Ascending aorta (tissue), 2 donors: ENCODE measurements at regions of chr7 and their contacts with region 1.

Region 1: GRCh38 chr7:151244196-151244840 is 4.2 kb downstream of the SMARCD3 start:
- DNase-seq: peak in 1 of 2 donors; percentile 72
- H3K4me3 ChIP-seq: peak overlapping the region in 1 of 2 donors; percentile 74
- H3K27ac ChIP-seq: peak overlapping the region in 1 of 2 donors; percentile 95
- H3K4me1 ChIP-seq: peaks cover 28 to 33% of the 10 kb centered on the region in 2 donors
- H3K27me3 ChIP-seq: no peaks in the 10 kb centered on the region
- CTCF ChIP-seq: peak; percentile 54 to 92 (median 91)

Region 2: DNA sequence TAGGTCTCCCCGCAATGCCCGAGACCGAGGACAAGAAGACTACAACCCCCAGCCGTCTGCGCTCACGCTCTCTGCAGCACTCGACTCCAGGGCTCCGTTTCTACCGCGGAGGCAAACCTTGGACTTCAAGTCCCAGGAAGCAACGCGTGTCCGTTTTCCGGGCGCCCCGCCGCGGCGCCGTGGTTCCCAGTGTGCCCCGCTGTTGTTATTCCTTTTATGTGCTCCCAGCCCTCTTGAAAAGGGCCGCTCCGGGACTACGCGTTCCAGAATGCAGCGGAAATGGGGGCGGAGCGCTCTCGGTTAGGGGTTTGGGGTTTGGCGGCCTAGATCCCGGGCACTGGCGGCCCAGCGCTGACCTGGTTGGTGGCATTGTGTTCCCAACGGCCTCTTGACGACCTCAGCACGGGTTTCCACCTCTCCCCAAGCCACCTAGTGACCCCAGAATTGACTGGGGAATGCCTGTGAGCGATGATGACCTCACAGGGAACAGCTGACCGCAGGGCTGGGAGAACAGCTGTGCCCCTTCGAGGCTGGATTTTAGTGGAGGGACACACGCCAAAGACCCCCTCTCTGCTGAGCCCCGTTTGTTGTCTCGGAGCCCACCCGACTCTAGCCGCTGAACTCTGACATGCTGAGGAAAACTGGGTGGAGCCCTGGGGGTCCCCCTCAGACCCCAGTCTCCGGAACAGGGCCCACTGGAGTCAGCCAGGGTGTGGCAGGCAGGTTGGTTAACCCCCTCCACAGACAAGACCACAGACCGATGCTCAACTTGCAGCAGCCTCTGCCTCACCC is 186.1 kb before region 1 on chr7:
- intact Hi-C with region 1: loop called (anchors 5 kb)
- DNase-seq: peak; percentile 98 to 100
- H3K4me3 ChIP-seq: peak overlapping the region; percentile 92 to 95
- H3K27ac ChIP-seq: peak overlapping the region; percentile 85 to 95
- H3K4me1 ChIP-seq: peaks cover 21 to 44% of the 10 kb centered on the region in 2 donors
- H3K27me3 ChIP-seq: no peaks in the 10 kb centered on the region
- CTCF ChIP-seq: no peak

Region 3: DNA sequence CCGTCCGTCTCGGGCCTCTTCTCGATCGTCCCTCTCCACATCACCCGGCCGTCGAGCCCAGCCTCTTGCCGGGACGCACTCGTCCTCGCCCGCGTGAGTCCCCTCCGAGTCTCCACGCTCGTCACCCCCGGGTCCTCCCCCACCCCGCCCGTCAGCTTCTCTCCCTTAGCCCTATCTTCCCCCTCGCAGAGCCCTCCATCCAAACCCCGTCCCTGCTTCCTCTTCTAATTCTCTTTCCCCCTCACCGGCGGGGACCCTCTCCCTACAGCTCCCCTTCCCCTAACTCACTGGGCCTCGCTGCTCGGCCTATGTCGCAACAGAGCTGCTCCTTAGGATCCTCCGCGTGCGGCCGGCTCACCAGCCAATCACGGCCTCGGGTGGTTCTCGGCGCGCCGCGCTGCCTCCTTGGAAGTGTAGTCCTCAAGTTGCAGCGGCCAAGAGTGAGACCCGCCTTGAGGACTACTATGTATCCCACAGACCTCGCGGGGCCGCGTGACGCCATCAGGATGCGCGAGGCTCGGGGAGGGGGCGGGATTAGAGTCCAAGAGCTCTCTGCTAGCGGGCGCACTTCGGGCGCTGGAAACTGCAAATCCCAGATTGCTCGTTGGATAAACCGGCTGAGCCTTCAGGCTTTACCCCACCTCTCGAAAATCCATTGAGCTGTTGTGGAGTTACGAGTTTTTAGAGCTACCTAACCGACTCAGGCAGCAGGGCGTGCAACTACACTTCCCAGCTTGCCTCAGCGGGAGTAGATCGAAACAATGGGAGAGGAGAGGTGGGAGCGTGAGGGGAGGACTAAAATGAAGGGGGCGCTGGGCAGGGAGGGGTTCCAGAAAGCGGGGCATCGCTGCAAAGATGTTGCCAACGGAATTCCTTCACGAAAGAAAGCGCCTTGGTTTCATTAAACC is 17.2 kb before region 1 on chr7 and contains the start of gene ABCF2:
- intact Hi-C with region 1: loop called (anchors 1 kb)
- DNase-seq: peak; percentile 98 to 100
- H3K4me3 ChIP-seq: peak within 1 kb of the TSS; percentile 79 to 94
- H3K27ac ChIP-seq: peak within 1 kb of the TSS; percentile 63 to 72
- H3K4me1 ChIP-seq: peaks cover 7 to 12% of the 10 kb centered on the region in 2 donors
- H3K27me3 ChIP-seq: no peaks in the 10 kb centered on the region
- CTCF ChIP-seq: no peak
- total RNA-seq, gene ABCF2: 85.3 TPM

Region 4: DNA sequence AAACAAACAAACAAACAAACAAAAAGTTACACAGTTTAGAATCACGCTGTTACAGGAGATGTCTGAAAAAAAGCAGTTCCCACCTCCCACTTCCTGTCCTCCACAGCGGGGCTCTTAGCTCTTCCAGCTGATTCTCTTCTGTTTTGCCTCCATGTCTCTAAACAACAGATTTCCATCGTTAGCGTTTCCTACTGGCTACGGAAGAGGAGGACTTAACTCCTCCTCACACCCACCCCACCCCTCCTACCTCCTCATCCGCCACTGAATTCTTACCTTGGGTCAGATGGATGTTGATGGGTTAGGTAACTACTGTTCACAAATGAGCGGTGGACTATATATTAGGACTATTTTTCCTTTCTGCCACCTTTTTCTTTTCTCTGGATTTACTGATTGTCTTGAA is 60.5 kb after region 1 on chr7:
- intact Hi-C with region 1: loop called (anchors 1 kb)
- DNase-seq: no peak
- H3K4me3 ChIP-seq: no peak overlapping the region
- H3K27ac ChIP-seq: no peak overlapping the region
- H3K4me1 ChIP-seq: peaks cover 3 to 4% of the 10 kb centered on the region in 2 donors
- H3K27me3 ChIP-seq: no peaks in the 10 kb centered on the region
- CTCF ChIP-seq: no peak

Region 5: GRCh38 chr7:151408839-151409666 is 164.7 kb after region 1 on chr7:
- intact Hi-C with region 1: no loop called
- DNase-seq: no peak
- H3K4me3 ChIP-seq: peak overlapping the region; percentile 51 to 65
- H3K27ac ChIP-seq: peak overlapping the region in 1 of 2 donors; percentile 4
- H3K4me1 ChIP-seq: peaks cover 8 to 19% of the 10 kb centered on the region in 2 donors
- H3K27me3 ChIP-seq: peaks cover 12% of the 10 kb centered on the region
- CTCF ChIP-seq: no peak

Region 6: GRCh38 chr7:151439855-151440798 is 195.8 kb after region 1 on chr7 and contains the start of gene CRYGN:
- intact Hi-C with region 1: loop called (anchors 5 kb)
- DNase-seq: peak in 1 of 2 donors; percentile 65
- H3K4me3 ChIP-seq: peak within 1 kb of the TSS; percentile 18 to 51
- H3K27ac ChIP-seq: peak within 1 kb of the TSS; percentile 88 to 95
- H3K4me1 ChIP-seq: peaks cover 20 to 46% of the 10 kb centered on the region in 2 donors
- H3K27me3 ChIP-seq: no peaks in the 10 kb centered on the region
- CTCF ChIP-seq: no peak
- total RNA-seq, gene CRYGN: not detected

Region 7: DNA sequence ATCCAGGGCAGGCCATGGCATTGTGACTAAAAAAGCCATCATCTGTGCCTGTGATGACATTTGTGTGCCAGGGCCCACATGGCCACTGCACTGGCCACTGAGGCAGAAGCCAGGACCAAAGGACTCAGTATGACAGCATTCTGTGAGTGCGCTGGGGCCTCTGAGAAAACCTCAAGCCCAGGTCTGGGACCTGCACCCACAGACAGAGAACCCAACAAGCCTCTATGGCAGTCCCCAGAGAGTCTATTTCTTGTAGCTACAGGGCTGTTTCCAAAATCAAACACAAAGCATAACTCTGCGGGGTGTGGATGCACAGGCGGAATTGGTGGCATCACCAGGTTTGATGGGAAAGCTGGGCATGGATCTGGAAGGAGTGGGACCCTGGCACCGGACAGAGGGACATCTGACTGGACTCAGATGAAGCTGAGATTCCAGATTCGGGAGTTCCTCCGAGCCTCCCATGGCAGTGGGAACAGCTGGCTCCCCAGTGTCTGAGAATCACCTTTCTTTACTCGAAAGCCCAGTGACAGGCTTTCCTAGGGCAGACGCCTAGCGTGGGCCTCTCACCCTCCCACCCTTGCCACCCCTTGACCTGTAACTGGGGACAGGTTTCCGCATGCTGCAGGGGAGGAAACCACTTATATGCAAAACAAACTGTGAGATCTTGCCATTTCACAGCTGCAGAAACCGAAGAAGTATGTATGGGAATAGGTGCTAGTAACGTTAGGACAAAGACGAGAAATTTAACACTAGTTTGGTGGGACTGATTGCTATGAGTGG is 345.9 kb after region 1 on chr7:
- intact Hi-C with region 1: no loop called
- DNase-seq: no peak
- H3K4me3 ChIP-seq: no peak overlapping the region
- H3K27ac ChIP-seq: no peak overlapping the region
- H3K4me1 ChIP-seq: peaks cover 0 to 7% of the 10 kb centered on the region in 2 donors
- H3K27me3 ChIP-seq: no peaks in the 10 kb centered on the region
- CTCF ChIP-seq: no peak

Region 8: DNA sequence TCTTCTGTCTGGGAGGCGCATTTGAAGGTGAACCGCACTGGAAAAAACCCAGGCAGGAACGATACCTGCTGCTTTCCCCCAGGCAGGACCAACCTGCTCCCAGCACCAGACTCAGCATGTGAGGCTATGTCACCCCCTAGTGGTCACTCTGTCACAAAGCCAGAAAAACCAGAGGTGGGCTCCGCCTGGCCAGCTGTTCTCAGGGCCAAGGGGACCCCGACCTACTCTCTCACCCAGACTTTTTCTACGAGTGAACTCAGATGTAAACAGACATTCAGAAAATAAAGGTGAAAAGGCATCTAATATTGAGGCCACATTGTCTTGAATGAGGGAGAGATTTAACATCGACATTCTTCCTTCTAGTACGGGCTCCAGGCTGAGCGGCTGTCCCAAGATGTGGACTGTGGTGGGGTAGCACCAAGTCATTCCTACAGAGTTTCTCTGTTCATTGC is 515.3 kb after region 1 on chr7:
- intact Hi-C with region 1: loop called (anchors 10 kb)
- DNase-seq: peak in 1 of 2 donors; percentile 79
- H3K4me3 ChIP-seq: no peak overlapping the region
- H3K27ac ChIP-seq: no peak overlapping the region
- H3K4me1 ChIP-seq: peaks cover 8 to 46% of the 10 kb centered on the region in 2 donors
- H3K27me3 ChIP-seq: no peaks in the 10 kb centered on the region
- CTCF ChIP-seq: peak; percentile 81 to 92 (median 86)